ENCODE measurements at regions of chr12 and their contacts with region 1.

Region 1: GRCh38 chr12:57735952-57736740 is 2.4 kb downstream of the AGAP2 start:
- DNase-seq: peak; percentile 80
- ATAC-seq: peak; percentile 70
- H3K4me3 Mint-ChIP-seq: peak overlapping the region; percentile 75
- H3K27ac Mint-ChIP-seq: no peak overlapping the region
- H3K4me1 Mint-ChIP-seq: peaks cover 25% of the 10 kb centered on the region
- H3K27me3 Mint-ChIP-seq: peaks cover 95% of the 10 kb centered on the region
- CTCF ChIP-seq: no peak

Region 2: DNA sequence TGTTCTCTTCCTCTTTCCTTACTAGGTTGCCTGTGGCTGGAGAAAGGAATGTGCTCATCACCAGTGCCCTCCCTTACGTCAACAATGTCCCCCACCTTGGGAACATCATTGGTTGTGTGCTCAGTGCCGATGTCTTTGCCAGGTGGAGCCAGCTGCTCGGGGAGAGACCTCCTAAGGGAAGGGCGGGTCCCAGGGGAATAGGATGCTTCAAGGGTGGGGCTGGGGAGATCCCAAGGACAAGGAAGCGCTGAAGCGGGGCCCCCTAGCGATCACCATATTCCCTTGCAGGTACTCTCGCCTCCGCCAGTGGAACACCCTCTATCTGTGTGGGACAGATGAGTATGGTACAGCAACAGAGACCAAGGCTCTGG is 238.0 kb before region 1 on chr12:
- CTCF ChIA-PET with region 1: no interaction called
- POLR2A ChIA-PET with region 1: interaction called, 17 read pairs
- DNase-seq: peak; percentile 55
- ATAC-seq: peak; percentile 90
- H3K4me3 Mint-ChIP-seq: no peak overlapping the region
- H3K27ac Mint-ChIP-seq: no peak overlapping the region
- H3K4me1 Mint-ChIP-seq: no peaks in the 10 kb centered on the region
- H3K27me3 Mint-ChIP-seq: no peaks in the 10 kb centered on the region
- CTCF ChIP-seq: peak; percentile 16; the same call in 1 of the 2 replicates

Region 3: GRCh38 chr12:57621497-57622292 is 114.5 kb before region 1 on chr12:
- CTCF ChIA-PET with region 1: interaction called, 18 read pairs
- POLR2A ChIA-PET with region 1: interaction called, 4 read pairs
- DNase-seq: peak; percentile 77
- ATAC-seq: peak; percentile 63
- H3K4me3 Mint-ChIP-seq: peak overlapping the region; percentile 78
- H3K27ac Mint-ChIP-seq: no peak overlapping the region
- H3K4me1 Mint-ChIP-seq: peaks cover 25% of the 10 kb centered on the region
- H3K27me3 Mint-ChIP-seq: peaks cover 100% of the 10 kb centered on the region
- CTCF ChIP-seq: peak; percentile 88

Region 4: DNA sequence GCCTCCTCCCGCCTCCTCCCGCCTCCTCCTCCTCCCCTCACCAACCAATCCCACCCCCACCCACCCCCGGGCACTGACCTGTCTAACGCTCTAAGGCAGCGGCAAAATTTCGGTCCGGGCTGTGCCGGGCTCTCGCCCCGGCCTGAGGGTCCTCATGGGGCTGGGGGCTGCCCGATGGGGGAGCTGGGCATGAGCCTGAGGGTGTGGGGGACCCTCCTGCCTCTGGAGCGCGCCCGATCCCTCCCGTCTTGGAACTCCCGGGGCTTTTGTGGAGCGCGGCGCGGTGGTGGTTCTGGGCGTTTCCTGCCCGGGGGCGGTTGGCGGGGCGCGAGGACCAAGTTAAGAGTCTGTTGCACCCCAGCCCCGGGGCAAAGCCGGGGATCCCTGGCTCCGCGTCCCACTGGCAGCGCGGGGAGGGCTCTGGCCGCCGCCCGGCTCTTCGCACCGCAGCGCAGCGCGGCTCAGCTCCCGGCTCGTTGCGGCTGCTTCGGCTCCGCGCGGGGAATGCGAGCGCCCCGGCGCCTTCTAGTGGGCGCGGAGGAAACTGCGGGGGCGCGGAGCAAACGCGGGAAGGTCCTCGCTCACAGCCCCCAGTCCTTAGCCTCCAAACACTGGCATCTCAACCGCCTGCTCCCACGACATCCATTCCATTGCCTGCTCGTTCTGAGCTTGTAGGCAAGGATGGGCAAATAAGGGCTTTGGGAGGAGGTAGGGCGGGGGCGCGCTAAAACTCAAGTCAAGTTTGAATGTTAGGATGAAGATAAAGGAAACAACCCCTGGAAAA is 103.3 kb before region 1 on chr12 and contains the start of gene B4GALNT1:
- CTCF ChIA-PET with region 1: interaction called, 23 read pairs
- POLR2A ChIA-PET with region 1: no interaction called
- DNase-seq: peak; percentile 77
- ATAC-seq: peak; percentile 85
- H3K4me3 Mint-ChIP-seq: peak within 1 kb of the TSS; percentile 74
- H3K27ac Mint-ChIP-seq: no peak within 1 kb of the TSS
- H3K4me1 Mint-ChIP-seq: peaks cover 15% of the 10 kb centered on the region
- H3K27me3 Mint-ChIP-seq: peaks cover 80% of the 10 kb centered on the region
- CTCF ChIP-seq: peak; percentile 73
- total RNA-seq, gene B4GALNT1: 0.46 to 1.2 TPM (median 1.2 TPM) in 3 replicates

Region 5: DNA sequence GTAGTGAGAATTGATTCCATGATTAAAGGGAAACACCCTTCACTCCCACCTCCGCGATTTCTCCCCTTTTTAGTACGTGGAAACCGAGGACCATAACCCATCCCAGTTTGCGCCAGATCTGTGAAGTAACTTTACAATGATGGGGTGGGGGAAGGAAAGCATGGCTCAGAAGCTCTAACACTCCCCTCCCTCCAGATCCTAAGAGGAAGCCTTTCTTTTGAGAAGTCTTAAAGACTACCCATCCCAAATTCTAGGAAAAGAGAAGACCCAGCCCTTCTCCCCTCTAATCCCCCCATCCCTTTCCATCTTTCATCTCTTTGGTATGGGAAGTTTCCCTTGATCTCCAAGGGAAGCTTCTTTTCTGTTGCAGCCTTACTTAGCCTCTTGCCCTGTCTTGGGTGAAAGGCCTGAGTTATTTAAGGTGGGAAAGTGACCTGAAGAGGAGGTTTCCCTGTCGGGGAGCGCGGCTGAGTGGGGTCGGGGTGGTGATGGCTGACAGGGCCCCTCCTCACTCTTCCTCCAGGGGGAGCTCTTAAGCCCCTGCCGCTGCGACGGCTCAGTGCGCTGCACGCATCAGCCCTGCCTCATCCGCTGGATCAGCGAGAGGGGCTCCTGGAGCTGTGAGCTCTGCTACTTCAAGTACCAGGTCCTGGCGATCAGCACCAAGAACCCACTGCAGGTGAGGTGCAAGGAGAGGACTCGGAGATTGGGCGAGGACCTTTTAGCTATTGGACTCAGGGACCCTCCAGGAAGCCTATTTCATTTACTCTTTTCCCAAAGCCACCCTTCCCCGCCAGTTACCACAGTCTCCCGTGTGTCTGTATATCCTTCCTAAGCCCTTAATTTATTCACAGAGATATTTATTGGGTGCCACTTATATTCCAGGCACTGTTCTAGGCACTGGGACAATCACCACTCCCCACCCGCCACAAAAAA is 20.5 kb after region 1 on chr12:
- CTCF ChIA-PET with region 1: interaction called, 29 read pairs
- POLR2A ChIA-PET with region 1: interaction called, 4 read pairs
- DNase-seq: peak; percentile 85
- ATAC-seq: peak; percentile 64
- H3K4me3 Mint-ChIP-seq: peak overlapping the region; percentile 72
- H3K27ac Mint-ChIP-seq: no peak overlapping the region
- H3K4me1 Mint-ChIP-seq: peaks cover 34% of the 10 kb centered on the region
- H3K27me3 Mint-ChIP-seq: peaks cover 84% of the 10 kb centered on the region
- CTCF ChIP-seq: peak; percentile 78

Measured in WTC11 (cell line).